Calu3 (cell line): ENCODE measurements at regions of chr1 and their contacts with region 1.

Region 1: DNA sequence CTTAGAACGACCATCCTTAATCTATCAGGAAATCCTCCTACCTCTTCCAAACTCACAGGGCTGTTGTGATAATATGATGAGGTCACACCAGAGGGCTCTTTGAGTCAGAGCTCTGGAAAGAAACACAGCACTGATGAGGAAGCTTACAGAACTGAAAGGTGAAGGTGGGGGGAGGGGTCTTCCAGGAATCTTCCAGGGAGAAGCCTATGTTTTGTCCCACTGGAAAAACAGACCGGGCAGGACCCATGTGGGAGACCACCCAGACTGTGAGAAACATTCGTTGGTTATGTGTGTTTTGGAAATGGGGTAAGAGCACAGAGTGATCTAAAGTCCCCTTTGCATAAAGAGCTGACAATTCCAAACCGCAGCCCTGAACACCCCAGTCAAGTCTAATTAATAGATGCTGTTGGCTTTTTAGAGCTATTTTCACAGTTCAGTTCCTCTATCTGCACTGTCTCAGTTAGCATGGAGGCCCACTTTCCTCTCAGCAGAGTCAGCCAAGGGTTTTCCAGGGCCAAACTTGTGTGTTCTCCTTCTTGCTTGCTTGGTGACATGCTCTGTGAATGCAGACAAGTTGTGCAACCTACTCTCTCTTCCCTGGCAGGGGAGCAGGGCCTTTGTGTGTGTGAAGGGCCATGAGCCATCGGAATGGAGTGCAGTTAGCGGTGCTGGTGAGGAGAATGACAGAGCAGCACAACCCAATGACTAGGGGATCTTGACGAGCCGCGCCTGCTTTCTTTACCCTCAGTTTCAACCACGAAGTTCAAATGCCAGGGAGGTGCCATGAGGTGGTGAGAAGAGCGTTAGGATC is 12.3 kb downstream of the PHLDA3 start:
- DNase-seq: no peak
- H3K4me3 Mint-ChIP-seq: peak overlapping the region; percentile 13
- H3K27ac Mint-ChIP-seq: peak overlapping the region; percentile 50
- H3K4me1 Mint-ChIP-seq: peaks cover 46% of the 10 kb centered on the region
- H3K27me3 Mint-ChIP-seq: no peaks in the 10 kb centered on the region
- CTCF ChIP-seq: no peak

Region 2: GRCh38 chr1:200564319-200564718 is 892.4 kb before region 1 on chr1:
- CTCF ChIA-PET with region 1: no interaction called
- intact Hi-C with region 1: no loop called
- DNase-seq: no peak
- H3K4me3 Mint-ChIP-seq: no peak overlapping the region
- H3K27ac Mint-ChIP-seq: no peak overlapping the region
- H3K4me1 Mint-ChIP-seq: peaks cover 27% of the 10 kb centered on the region
- H3K27me3 Mint-ChIP-seq: no peaks in the 10 kb centered on the region
- CTCF ChIP-seq: no peak

Region 3: DNA sequence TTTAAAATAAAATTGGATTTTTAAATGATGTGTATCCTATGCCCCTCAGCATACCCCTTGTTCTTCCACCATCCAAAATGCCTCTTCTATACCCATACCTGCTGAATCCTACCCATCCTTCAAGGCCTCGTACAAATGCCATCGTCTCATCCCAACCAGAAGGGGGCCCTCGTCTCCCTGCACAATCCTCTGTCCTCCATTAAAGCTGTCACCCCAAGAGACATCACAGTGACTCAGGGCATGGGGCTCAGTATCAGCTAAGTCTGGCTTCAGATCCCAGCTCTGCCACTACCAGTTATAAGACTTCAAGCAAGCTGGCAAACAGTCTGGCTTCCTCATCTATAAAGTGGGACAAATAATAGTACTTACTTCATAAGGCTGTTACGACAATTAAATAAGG is 242.2 kb before region 1 on chr1:
- CTCF ChIA-PET with region 1: no interaction called
- intact Hi-C with region 1: no loop called
- DNase-seq: no peak
- H3K4me3 Mint-ChIP-seq: no peak overlapping the region
- H3K27ac Mint-ChIP-seq: no peak overlapping the region
- H3K4me1 Mint-ChIP-seq: no peaks in the 10 kb centered on the region
- H3K27me3 Mint-ChIP-seq: peaks cover 93% of the 10 kb centered on the region
- CTCF ChIP-seq: no peak

Region 4: GRCh38 chr1:201224666-201225370 is 231.9 kb before region 1 on chr1:
- CTCF ChIA-PET with region 1: no interaction called
- intact Hi-C with region 1: no loop called
- DNase-seq: no peak
- H3K4me3 Mint-ChIP-seq: no peak overlapping the region
- H3K27ac Mint-ChIP-seq: no peak overlapping the region
- H3K4me1 Mint-ChIP-seq: no peaks in the 10 kb centered on the region
- H3K27me3 Mint-ChIP-seq: peaks cover 67% of the 10 kb centered on the region
- CTCF ChIP-seq: no peak

Region 5: GRCh38 chr1:201427963-201428362 is 28.7 kb before region 1 on chr1:
- CTCF ChIA-PET with region 1: no interaction called
- intact Hi-C with region 1: no loop called
- DNase-seq: no peak
- H3K4me3 Mint-ChIP-seq: no peak overlapping the region
- H3K27ac Mint-ChIP-seq: no peak overlapping the region
- H3K4me1 Mint-ChIP-seq: no peaks in the 10 kb centered on the region
- H3K27me3 Mint-ChIP-seq: peaks cover 29% of the 10 kb centered on the region
- CTCF ChIP-seq: no peak

Region 6: GRCh38 chr1:201511941-201512539 is 55.3 kb after region 1 on chr1:
- CTCF ChIA-PET with region 1: interaction called, 14 read pairs
- intact Hi-C with region 1: no loop called
- DNase-seq: no peak
- H3K4me3 Mint-ChIP-seq: no peak overlapping the region
- H3K27ac Mint-ChIP-seq: no peak overlapping the region
- H3K4me1 Mint-ChIP-seq: peaks cover 46% of the 10 kb centered on the region
- H3K27me3 Mint-ChIP-seq: no peaks in the 10 kb centered on the region
- CTCF ChIP-seq: no peak